ENCODE measurements at regions of chr4 and their contacts with region 1.

Region 1: DNA sequence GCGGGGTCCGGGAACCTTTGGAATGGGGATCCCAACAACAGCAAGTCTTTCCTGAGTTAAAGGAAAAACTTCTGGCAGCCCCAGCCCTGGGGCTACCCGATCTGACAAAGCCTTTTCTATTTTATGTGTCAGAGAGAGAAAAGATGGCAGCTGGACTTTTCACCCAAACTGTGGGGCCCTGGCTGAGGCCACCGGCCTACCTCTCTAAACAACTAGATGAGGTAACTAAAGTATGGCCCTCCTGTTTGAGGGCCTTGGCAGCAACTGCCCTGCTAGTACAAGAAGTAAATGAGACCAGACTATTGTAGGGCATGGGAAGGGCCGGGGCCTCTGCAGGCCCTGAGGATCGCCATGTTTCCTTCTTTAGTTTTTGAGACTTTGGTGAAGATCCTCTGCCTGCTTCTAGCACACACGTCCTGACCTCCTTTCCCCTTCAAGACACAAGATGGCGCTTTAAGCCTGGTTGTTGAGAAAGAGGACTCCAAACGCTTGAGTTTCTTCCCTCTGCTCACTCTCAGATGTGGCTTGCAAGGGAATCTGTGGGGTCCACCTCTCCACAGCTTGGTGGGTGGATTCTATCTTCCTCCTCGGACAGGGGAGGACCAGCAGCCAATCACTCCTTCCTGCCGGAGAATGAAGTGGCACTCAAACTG is 18.5 kb upstream of the DRD5 start:
- DNase-seq: peak; percentile 76
- H3K4me3 ChIP-seq: no peak overlapping the region
- H3K27ac ChIP-seq: no peak overlapping the region
- H3K4me1 ChIP-seq: no peaks in the 10 kb centered on the region
- H3K27me3 ChIP-seq: no peaks in the 10 kb centered on the region
- CTCF ChIP-seq: peak; percentile 47 to 65 (median 47)
- POLR2A ChIP-seq: no peak

Region 2: GRCh38 chr4:9880406-9881197 is 117.7 kb after region 1 on chr4:
- intact Hi-C with region 1: loop called (anchors 10 kb)
- DNase-seq: peak; percentile 16
- H3K4me3 ChIP-seq: no peak overlapping the region
- H3K27ac ChIP-seq: no peak overlapping the region
- H3K4me1 ChIP-seq: peaks cover 13% of the 10 kb centered on the region
- H3K27me3 ChIP-seq: no peaks in the 10 kb centered on the region
- CTCF ChIP-seq: no peak
- POLR2A ChIP-seq: no peak

Region 3: DNA sequence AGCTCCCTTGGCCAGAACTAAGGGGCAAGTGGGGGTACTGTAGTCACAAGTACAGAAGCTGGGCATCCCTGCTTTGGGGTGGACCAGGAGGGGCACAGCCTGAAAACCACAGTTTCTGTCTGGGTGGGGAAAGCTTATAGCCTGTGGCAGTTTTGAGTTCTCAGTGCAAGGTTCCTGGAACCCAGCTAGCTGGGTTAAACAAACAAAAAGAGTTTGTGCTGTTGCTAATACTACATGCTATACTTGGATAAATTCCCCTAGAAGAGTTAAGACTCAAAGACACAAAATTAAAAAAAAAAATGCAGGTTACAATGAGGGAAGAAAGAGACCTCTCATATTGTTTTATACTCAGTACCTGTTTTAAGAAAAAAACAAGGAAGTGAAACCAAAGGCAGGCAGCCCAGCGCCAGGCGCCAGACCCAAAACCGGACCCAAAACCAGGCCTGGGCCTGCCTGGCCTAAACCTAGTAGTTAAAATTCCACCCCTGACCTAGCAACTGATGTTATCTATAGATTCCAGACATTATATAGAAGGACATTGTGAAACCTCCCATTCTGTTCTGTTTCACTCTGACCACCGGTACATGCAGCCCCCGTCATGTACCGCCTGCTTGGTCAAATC is 207.6 kb after region 1 on chr4:
- intact Hi-C with region 1: no loop called
- DNase-seq: no peak
- H3K4me3 ChIP-seq: no peak overlapping the region
- H3K27ac ChIP-seq: no peak overlapping the region
- H3K4me1 ChIP-seq: no peaks in the 10 kb centered on the region
- H3K27me3 ChIP-seq: no peaks in the 10 kb centered on the region
- CTCF ChIP-seq: no peak
- POLR2A ChIP-seq: no peak

Region 4: GRCh38 chr4:10013722-10014121 is 250.8 kb after region 1 on chr4:
- intact Hi-C with region 1: loop called (anchors 5 kb)
- DNase-seq: peak; percentile 72
- H3K4me3 ChIP-seq: no peak overlapping the region
- H3K27ac ChIP-seq: no peak overlapping the region
- H3K4me1 ChIP-seq: no peaks in the 10 kb centered on the region
- H3K27me3 ChIP-seq: no peaks in the 10 kb centered on the region
- CTCF ChIP-seq: peak in 2 of 3 experiments; percentile 47 to 55
- POLR2A ChIP-seq: no peak

Region 5: DNA sequence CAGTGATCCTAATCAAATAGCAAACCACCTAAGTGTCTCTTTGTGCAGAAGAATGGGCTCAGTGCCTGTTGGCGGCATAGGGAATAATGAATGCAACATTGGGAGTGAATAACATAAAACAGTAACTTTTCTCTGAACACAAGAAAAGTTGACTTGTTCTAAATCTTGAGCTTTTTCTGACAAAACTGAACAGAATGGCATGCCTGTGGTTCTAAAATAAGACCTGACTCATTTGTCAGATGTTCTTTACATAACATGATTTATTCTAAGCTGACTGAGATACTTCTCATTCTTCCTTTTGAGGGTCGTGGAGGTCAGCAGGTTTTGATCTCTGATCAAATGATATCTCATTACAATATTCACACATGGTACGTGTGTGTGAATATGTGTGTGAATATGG is 519.0 kb after region 1 on chr4:
- intact Hi-C with region 1: no loop called
- DNase-seq: no peak
- H3K4me3 ChIP-seq: no peak overlapping the region
- H3K27ac ChIP-seq: no peak overlapping the region
- H3K4me1 ChIP-seq: no peaks in the 10 kb centered on the region
- H3K27me3 ChIP-seq: no peaks in the 10 kb centered on the region
- CTCF ChIP-seq: no peak
- POLR2A ChIP-seq: no peak

Measured in testis (tissue), 5 donors.